Activated T-helper 1 cell treated with anti-CD3 and anti-CD28 coated beads, Interleukin-12 subunit alpha, Interleukin-12 subunit beta, Interleukin-2, Interleukin-4 antibody, amounts not matched to agents 30 ng/mL and 10 ng/mL and 1 ng/mL, durations not matched to agents 14 hours and 24 hours and 36 hours (primary cell): ENCODE measurements at regions of chr7 and their contacts with region 1.

Region 1: DNA sequence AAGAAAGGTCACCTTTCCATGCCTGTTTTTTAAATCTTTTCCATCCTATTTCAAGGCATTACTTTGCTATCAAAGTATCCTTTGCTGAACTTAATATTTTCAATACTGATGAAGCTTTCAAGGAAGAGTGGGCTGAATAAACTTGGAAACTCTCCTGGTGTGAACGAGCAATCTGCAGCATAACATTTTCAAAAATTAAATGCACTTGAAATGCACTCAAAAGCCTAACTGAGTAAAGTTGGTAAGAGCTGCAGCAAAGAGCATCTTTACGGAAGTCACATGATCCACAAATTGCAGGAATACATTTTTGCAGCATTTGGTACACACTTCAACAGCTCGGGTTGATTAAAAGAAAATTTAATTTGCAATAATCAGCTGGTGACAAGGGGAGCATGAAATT is 367.3 kb downstream of the PHTF2 start:
- DNase-seq: no peak
- H3K4me3 Mint-ChIP-seq: no peak overlapping the region
- H3K27ac Mint-ChIP-seq: no peak overlapping the region
- H3K4me1 Mint-ChIP-seq: no peaks in the 10 kb centered on the region
- H3K27me3 Mint-ChIP-seq: no peaks in the 10 kb centered on the region

Region 2: GRCh38 chr7:78184299-78184698 is 18.4 kb after region 1 on chr7:
- intact Hi-C with region 1: loop called (anchors 1 kb)
- DNase-seq: no peak
- H3K4me3 Mint-ChIP-seq: no peak overlapping the region
- H3K27ac Mint-ChIP-seq: no peak overlapping the region
- H3K4me1 Mint-ChIP-seq: no peaks in the 10 kb centered on the region
- H3K27me3 Mint-ChIP-seq: peaks cover 2% of the 10 kb centered on the region